Panc1 (cell line): ENCODE measurements at regions of chr11 and their contacts with region 1.

Region 1: GRCh38 chr11:26753723-26754504 is 32.1 kb upstream of the SLC5A12 start:
- DNase-seq: peak; percentile 13
- ATAC-seq: peak; percentile 85
- H3K4me3 ChIP-seq: no peak overlapping the region
- H3K27ac ChIP-seq: no peak overlapping the region
- H3K4me1 ChIP-seq: no peaks in the 10 kb centered on the region
- H3K27me3 ChIP-seq: no peaks in the 10 kb centered on the region
- CTCF ChIP-seq: peak; percentile 71

Region 2: DNA sequence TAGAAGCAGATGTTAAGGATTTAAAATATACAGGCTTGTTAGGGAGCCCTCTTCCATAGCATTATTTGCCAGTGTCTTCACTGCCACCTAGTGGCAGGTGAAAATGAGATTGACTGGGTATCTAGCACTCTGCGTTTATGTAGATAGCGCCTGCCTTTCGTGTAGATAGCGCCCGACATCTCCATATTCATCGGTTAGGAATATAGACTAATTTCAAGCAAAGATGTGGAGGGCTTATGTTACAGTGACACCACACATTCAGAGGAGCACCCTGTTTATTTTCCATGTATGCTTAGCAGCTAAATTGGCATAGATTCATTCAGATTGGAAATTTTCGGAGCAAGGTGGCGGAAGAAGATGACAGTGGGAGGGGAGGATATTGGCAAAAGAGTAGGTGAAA is 104.0 kb before region 1 on chr11:
- CTCF ChIA-PET with region 1: no interaction called
- POLR2A ChIA-PET with region 1: no interaction called
- in situ Hi-C with region 1: no loop called
- intact Hi-C with region 1: no loop called
- DNase-seq: peak; percentile 36
- ATAC-seq: peak; percentile 97
- H3K4me3 ChIP-seq: no peak overlapping the region
- H3K27ac ChIP-seq: no peak overlapping the region
- H3K4me1 ChIP-seq: no peaks in the 10 kb centered on the region
- H3K27me3 ChIP-seq: 0 out of 2 replicates have a peak, but pooled peaks cover 2% of the 10 kb centered on the region
- CTCF ChIP-seq: peak; percentile 86

Region 3: DNA sequence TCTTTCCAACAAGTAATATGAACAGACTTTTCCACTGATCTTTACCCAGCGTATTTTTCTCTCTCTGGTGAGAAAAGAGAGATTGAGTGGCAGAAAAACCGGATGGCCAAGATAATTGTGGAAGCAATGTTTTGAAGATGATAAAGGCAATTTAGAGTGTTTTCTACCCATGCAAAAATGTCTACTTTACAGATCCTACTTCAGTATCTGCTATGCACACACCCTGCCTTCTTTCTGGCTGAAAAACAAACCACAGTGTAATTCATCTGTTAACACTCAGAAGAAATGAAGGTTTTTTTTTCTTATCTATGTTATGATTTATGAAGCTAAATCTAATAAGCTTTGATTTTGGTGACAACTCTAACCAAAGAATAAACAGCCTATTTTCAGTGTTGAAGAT is 88.9 kb before region 1 on chr11:
- CTCF ChIA-PET with region 1: no interaction called
- POLR2A ChIA-PET with region 1: no interaction called
- in situ Hi-C with region 1: no loop called
- intact Hi-C with region 1: no loop called
- DNase-seq: no peak
- ATAC-seq: no peak
- H3K4me3 ChIP-seq: no peak overlapping the region
- H3K27ac ChIP-seq: no peak overlapping the region
- H3K4me1 ChIP-seq: no peaks in the 10 kb centered on the region
- H3K27me3 ChIP-seq: no peaks in the 10 kb centered on the region
- CTCF ChIP-seq: no peak

Region 4: GRCh38 chr11:26828290-26828689 is 74.4 kb after region 1 on chr11:
- CTCF ChIA-PET with region 1: interaction called, 10 read pairs
- POLR2A ChIA-PET with region 1: no interaction called
- in situ Hi-C with region 1: no loop called
- intact Hi-C with region 1: no loop called
- DNase-seq: no peak
- ATAC-seq: no peak
- H3K4me3 ChIP-seq: no peak overlapping the region
- H3K27ac ChIP-seq: no peak overlapping the region
- H3K4me1 ChIP-seq: no peaks in the 10 kb centered on the region
- H3K27me3 ChIP-seq: no peaks in the 10 kb centered on the region
- CTCF ChIP-seq: no peak